Activated naive CD4-positive, alpha-beta T cell treated with anti-CD3 and anti-CD28 coated beads for 36 hours (primary cell): ENCODE measurements at regions of chr14 and their contacts with region 1.

Region 1: GRCh38 chr14:74793506-74794168 is 30.5 kb downstream of the YLPM1 start:
- DNase-seq: peak; percentile 31
- H3K4me3 Mint-ChIP-seq: peak overlapping the region; percentile 60
- H3K27ac Mint-ChIP-seq: peak overlapping the region; percentile 81
- H3K4me1 Mint-ChIP-seq: peaks cover 40% of the 10 kb centered on the region
- H3K27me3 Mint-ChIP-seq: no peaks in the 10 kb centered on the region

Region 2: GRCh38 chr14:74380156-74380555 is 413.5 kb before region 1 on chr14:
- CTCF ChIA-PET with region 1: no interaction called
- intact Hi-C with region 1: no loop called
- DNase-seq: no peak
- H3K4me3 Mint-ChIP-seq: no peak overlapping the region
- H3K27ac Mint-ChIP-seq: no peak overlapping the region
- H3K4me1 Mint-ChIP-seq: no peaks in the 10 kb centered on the region
- H3K27me3 Mint-ChIP-seq: no peaks in the 10 kb centered on the region

Region 3: DNA sequence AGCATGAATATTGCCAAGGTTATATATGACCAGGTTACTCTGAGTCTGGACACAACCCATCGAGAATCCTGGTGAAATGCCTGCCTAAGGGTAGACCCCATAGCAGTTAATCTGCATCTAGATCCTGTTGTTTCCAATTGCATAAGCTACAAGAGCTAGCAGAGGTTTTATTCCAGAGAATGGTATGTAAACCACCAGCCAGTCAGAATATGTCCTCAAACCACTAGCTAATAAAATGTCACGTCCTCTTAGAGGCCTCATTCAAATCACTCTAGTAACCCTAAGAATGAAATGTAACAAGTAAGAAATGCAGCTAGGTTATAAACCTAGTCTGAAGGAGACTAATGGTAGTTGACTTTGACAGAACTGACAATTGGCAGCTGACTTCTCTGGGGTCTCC is 39.5 kb before region 1 on chr14:
- CTCF ChIA-PET with region 1: no interaction called
- intact Hi-C with region 1: no loop called
- DNase-seq: no peak
- H3K4me3 Mint-ChIP-seq: no peak overlapping the region
- H3K27ac Mint-ChIP-seq: no peak overlapping the region
- H3K4me1 Mint-ChIP-seq: no peaks in the 10 kb centered on the region
- H3K27me3 Mint-ChIP-seq: no peaks in the 10 kb centered on the region

Region 4: GRCh38 chr14:74836251-74836960 is 42.8 kb after region 1 on chr14:
- CTCF ChIA-PET with region 1: interaction called, 3 read pairs
- intact Hi-C with region 1: loop called (anchors 2 kb)
- DNase-seq: peak; percentile 51
- H3K4me3 Mint-ChIP-seq: no peak overlapping the region
- H3K27ac Mint-ChIP-seq: peak overlapping the region; percentile 85
- H3K4me1 Mint-ChIP-seq: peaks cover 63% of the 10 kb centered on the region
- H3K27me3 Mint-ChIP-seq: no peaks in the 10 kb centered on the region

Region 5: DNA sequence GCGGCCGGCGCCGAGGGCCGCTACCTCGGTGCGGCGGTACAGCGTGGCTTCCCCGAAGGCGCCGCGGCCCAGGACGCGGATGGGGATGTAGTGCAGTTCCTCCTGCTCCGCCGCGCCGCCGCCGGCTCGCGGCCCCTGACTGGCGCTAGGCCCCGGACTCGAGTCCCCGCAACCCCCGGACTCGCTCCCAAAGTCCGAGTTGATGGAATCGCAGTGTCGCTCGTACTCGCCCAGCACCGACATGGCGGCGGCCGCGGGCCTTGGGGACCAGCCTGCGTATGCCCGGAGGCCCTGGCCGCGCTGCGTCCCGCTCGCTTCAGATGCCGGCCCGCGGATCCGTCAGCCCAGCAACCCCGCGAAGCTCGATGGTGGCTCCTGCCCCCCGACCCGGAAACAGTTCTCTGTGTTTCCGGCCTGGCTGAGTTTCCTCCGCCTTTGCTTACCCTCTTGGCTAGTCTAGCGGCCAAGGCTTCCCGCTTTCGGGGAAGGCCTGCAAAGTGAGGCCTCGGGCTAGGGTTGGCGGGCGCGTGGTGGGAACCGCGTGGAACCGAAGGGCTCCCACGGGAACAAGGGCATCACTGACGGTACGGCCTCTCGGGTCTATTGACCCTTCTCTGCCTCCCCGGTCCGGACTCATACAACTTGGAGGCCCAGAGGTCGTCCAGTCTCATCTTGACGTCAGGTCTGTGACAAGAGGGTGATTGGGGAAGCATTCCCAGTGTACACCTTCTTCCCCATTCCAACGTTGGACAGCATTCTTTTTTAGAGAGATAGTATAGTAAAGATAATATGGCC is 333.2 kb after region 1 on chr14 and contains the start of gene NEK9:
- CTCF ChIA-PET with region 1: no interaction called
- intact Hi-C with region 1: no loop called
- DNase-seq: peak; percentile 92
- H3K4me3 Mint-ChIP-seq: peak within 1 kb of the TSS; percentile 96
- H3K27ac Mint-ChIP-seq: peak within 1 kb of the TSS; percentile 97
- H3K4me1 Mint-ChIP-seq: peaks cover 40% of the 10 kb centered on the region
- H3K27me3 Mint-ChIP-seq: no peaks in the 10 kb centered on the region
- total RNA-seq, gene NEK9: 53.5 to 55.6 TPM

Region 6: GRCh38 chr14:75279162-75279762 is 485.6 kb after region 1 on chr14:
- CTCF ChIA-PET with region 1: no interaction called
- intact Hi-C with region 1: no loop called
- DNase-seq: peak; percentile 79
- H3K4me3 Mint-ChIP-seq: peak overlapping the region; percentile 93
- H3K27ac Mint-ChIP-seq: peak overlapping the region; percentile 70
- H3K4me1 Mint-ChIP-seq: peaks cover 29% of the 10 kb centered on the region
- H3K27me3 Mint-ChIP-seq: peaks cover 22% of the 10 kb centered on the region